ENCODE measurements at regions of chr5 and their contacts with region 1.

Region 1: GRCh38 chr5:11524188-11524587 is 380.1 kb downstream of the CTNND2 start:
- DNase-seq: no peak
- ATAC-seq: peak; percentile 47

Region 2: GRCh38 chr5:9596171-9596780 is 1927.9 kb before region 1 on chr5:
- intact Hi-C with region 1: no loop called
- DNase-seq: no peak
- ATAC-seq: peak; percentile 36

Region 3: GRCh38 chr5:10775646-10776045 is 748.5 kb before region 1 on chr5:
- intact Hi-C with region 1: no loop called
- DNase-seq: no peak
- ATAC-seq: no peak

Region 4: DNA sequence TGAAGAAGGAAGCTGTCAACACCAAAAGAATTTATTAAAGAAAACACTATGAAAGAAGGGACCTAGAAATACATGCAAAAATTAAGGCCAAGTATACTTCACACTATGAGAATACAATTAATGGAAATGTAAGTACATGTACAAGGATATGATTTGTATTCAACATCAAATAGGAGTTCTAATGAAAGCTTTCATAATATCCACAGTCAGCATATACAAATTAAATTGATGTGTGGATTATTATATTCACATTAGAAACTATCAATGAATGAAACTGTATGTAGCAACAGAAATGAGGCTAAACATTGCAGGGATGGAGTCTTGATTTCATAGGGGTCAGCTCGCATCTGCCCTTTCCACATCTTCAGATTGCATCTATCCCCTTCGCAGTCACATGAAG is 21.4 kb before region 1 on chr5:
- intact Hi-C with region 1: loop called (anchors 2 kb)
- DNase-seq: no peak
- ATAC-seq: no peak

Measured in sciatic nerve (tissue), 2 donors.